ENCODE measurements at regions of chr1 and their contacts with region 1.

Region 1: DNA sequence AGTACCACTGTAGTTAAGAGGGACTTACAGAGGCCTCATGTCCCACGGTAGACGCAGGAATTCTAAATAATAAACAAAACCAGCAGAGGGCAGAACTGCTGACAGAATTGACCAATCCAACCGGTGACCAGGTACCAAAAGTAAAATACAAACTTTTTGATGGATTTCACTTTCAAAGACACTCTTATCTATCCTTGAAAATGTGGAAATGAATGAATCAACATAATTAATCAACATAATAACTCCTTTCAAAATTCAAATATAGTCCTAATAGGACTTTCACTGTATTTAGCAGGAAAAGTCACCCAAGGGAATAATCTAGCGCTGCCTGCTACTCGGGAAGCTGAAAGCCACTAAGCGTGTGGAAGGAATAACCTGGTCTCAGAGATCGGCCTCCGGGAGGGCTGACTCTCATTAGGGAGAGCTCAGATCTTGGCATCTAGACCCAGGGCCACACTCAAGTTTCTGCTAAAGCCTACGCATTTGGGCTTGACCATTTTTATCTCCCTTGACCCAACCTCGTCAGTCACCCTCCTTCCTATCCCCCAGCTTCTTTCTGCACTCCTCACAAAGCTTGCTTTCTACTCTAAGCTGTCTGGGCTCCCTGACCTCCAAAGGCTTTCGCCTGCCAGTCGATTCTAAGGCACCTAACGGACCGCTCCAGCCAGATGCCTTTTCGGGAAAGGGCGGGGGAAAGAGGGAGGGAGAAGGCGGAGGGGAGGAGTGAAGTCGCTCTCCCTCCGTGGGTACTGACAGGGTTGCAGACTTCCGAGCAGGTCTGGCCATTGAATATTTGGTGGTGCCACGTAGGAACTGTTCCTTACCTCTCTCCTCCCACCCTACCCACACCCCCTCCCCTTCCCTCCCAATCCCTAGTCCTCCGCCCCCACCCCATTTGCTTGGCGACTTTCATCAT is 1.6 kb downstream of the COL11A1 start:
- DNase-seq: peak; percentile 58

Region 2: DNA sequence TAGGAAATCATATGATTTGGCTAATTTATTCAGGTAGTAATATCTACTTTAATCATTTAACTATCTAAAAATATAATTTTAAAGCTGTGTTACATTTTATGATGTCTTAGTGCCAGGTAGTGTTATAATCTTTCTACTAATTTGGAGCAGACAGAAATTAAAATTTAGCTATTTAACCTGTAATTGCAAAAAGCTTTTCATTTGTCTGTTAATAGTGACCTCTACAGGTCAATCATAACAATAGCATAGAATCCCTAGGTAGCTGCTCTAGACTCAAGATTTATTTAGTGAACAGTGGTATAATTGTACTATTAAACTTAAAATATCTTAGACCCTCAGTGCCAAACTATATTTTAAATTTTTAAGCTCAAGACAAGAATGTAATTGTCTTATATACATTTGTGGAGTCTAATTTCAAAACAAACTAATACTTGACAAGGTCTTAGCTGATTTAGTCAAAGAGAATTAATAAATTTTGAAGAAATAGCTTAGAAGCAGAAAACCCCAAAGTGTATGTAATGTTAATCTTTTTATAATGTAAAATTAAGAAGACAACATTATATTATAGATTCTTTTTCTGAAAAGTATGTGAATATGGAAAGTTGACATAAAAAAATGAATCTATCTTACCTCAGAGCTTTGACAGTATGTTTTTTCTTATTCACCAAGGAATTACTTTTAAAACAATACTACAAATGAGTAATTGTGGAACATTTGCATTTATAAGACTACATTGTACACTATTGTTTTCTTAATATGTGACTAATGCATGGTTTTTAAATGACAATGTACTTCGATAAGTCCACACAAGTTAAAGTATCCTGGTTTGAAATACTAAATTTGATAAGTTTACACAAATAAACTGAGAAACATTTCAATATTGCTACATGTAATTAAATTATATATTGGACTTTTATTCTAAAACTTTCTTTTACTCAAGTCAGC is 354.7 kb after region 1 on chr1:
- in situ Hi-C with region 1: loop called (anchors 25 kb)
- DNase-seq: peak; percentile 30